Uterus (tissue), 4 donors: ENCODE measurements at regions of chr2 and their contacts with region 1.

Region 1: DNA sequence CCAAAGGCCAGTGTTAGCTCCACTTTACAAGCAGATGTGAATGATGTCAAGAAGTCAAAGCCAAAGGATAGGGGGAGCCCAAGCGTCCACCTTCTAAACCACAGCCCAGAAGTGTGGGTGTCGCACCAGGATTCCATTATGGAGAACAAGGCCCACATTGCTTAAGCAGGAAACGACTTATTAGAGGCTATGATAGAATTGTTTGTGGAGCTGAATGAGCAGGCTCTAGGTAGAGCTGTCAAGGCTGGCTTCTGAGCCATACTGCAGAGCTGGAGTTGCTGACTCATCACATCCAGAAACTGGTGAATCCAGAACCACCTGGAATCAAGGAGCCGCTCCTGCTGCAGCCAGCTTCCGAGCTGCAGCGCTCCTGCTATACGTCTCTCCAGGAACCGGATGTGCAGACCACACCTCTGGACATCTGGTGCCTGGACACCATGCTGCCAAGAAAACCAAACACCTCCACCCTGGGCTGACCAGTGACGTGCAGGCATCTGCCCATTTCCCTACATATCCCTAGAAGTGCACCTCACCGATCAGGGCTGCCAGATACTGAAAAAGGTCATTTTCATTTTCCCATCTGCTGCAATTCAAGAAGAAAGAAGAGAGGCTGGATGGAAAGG is 6.2 kb upstream of the TWIST2 start:
- DNase-seq: no peak
- H3K4me3 ChIP-seq: no peak overlapping the region
- H3K27ac ChIP-seq: no peak overlapping the region
- H3K4me1 ChIP-seq: no peaks in the 10 kb centered on the region
- H3K27me3 ChIP-seq: no peaks in the 10 kb centered on the region
- CTCF ChIP-seq: no peak
- POLR2A ChIP-seq: no peak

Region 2: DNA sequence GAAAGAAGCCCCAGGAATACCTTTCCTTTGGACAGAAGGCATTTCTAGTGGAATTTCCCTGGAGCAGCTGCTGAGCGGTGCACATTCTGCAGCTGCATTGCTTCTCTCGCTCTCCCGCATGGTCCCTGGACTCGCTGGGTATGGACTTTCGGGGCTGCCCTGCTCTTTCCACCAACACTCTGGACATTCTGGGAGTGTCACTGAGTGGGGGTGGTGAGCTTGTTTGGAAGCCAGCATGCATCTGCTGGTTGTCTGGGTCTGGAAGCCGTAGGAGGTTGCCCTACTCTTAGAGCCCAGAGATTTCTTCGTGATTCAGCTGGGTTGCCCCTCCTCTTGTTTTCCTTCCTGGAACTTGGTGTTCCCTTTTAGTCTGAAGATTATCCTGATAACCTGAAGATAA is 58.9 kb after region 1 on chr2:
- intact Hi-C with region 1: loop called (anchors 5 kb)
- DNase-seq: no peak
- H3K4me3 ChIP-seq: no peak overlapping the region
- H3K27ac ChIP-seq: peak overlapping the region; percentile 30 to 76
- H3K4me1 ChIP-seq: peaks cover 8 to 18% of the 10 kb centered on the region in 2 donors
- H3K27me3 ChIP-seq: no peaks in the 10 kb centered on the region
- CTCF ChIP-seq: no peak
- POLR2A ChIP-seq: no peak

Region 3: GRCh38 chr2:239157771-239158170 is 316.1 kb after region 1 on chr2:
- intact Hi-C with region 1: no loop called
- DNase-seq: peak; percentile 17 to 33
- H3K4me3 ChIP-seq: no peak overlapping the region
- H3K27ac ChIP-seq: no peak overlapping the region
- H3K4me1 ChIP-seq: no peaks in the 10 kb centered on the region
- H3K27me3 ChIP-seq: no peaks in the 10 kb centered on the region
- CTCF ChIP-seq: no peak
- POLR2A ChIP-seq: no peak